ENCODE measurements at regions of chr2 and their contacts with region 1.

Region 1: DNA sequence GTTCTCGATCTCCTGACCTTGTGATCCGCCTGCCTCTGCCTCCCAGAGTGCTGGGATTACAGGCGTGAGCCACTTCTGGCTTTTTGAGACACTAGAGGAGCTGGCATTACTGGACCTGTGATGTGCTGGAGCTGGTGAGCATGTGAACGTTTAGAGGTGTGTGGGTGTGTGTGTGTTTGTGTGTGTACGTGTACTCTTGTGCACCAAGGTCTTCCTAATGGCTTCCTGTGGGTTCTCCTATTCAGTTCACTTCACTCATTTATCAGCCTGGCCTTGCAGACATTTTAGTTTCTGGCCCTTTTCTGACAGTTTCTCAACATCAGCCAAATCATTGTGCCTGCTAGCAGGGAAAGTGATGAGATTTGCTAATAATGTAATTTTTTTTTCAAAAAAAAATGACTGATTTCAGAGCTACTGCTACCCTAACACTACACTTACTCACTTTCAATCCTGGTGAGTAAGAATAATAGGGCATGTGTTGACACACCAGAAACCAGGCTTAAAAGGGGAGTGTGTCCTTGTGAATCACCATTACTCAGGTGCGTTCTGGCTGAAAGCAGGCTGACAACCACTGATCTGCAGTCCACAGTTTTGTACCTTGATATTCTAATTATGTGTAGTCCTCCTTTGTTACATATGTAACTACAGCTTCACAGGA is 41.0 kb upstream of the ACTR3 start:
- DNase-seq: peak; percentile 73
- H3K4me3 Mint-ChIP-seq: no peak overlapping the region
- H3K27ac Mint-ChIP-seq: peak overlapping the region; percentile 88
- H3K4me1 Mint-ChIP-seq: peaks cover 22% of the 10 kb centered on the region
- H3K27me3 Mint-ChIP-seq: no peaks in the 10 kb centered on the region

Region 2: DNA sequence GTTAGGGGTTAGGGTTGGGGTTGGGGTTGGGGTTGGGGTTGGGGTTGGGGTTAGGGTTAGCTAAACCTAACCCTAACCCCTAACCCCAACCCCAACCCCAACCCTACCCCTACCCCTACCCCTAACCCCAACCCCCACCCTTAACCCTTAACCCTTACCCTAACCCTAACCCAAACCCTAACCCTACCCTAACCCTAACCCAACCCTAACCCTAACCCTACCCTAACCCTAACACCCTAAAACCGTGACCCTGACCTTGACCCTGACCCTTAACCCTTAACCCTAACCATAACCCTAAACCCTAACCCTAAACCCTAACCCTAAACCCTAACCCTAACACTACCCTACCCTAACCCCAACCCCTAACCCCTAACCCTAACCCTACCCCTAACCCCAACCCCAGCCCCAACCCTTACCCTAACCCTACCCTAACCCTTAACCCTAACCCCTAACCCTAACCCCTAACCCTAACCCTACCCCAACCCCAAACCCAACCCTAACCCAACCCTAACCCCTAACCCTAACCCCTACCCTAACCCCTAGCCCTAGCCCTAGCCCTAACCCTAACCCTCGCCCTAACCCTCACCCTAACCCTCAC is 245.9 kb before region 1 on chr2:
- CTCF ChIA-PET with region 1: no interaction called
- intact Hi-C with region 1: loop called (anchors 5 kb)
- DNase-seq: no peak
- H3K4me3 Mint-ChIP-seq: peak overlapping the region; percentile 93
- H3K27ac Mint-ChIP-seq: peak overlapping the region; percentile 84
- H3K4me1 Mint-ChIP-seq: peaks cover 9% of the 10 kb centered on the region
- H3K27me3 Mint-ChIP-seq: no peaks in the 10 kb centered on the region

Region 3: DNA sequence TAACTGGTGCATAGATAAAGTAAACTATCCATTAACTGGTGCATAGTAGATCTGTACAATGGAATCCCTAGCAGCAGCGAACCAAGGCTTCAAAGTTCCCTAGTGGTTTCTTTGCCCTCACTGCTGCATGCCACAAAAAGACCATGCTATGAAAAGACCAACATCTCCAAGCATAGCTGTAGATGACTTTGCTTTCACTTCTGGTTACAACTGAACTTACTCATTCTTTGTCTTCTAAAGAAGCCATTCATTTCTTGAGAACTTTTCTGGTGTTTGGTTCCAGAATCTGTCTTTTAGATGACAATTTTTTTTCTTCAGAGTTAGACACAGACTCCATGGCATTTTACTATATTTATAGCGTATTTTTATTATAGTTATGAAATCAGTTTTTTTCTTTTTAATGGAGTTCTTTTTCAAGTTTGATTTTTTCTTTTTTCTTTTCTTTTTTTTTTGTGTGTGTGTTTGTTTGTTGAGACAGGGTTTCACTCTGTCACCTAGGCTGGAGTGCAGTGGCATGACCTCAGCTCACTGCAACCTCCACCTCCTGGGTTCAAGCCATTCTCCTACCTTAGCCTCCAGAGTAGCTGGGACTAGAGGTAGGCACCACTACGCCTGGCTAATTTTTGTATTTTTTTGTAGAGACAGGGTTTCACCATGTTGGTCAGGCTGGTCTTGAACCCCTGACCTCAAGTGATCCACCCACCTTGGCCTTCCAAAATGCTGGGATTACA is 156.0 kb before region 1 on chr2:
- CTCF ChIA-PET with region 1: no interaction called
- intact Hi-C with region 1: loop called (anchors 1 kb)
- DNase-seq: peak; percentile 57
- H3K4me3 Mint-ChIP-seq: peak overlapping the region; percentile 6
- H3K27ac Mint-ChIP-seq: peak overlapping the region; percentile 77
- H3K4me1 Mint-ChIP-seq: peaks cover 34% of the 10 kb centered on the region
- H3K27me3 Mint-ChIP-seq: no peaks in the 10 kb centered on the region

Region 4: DNA sequence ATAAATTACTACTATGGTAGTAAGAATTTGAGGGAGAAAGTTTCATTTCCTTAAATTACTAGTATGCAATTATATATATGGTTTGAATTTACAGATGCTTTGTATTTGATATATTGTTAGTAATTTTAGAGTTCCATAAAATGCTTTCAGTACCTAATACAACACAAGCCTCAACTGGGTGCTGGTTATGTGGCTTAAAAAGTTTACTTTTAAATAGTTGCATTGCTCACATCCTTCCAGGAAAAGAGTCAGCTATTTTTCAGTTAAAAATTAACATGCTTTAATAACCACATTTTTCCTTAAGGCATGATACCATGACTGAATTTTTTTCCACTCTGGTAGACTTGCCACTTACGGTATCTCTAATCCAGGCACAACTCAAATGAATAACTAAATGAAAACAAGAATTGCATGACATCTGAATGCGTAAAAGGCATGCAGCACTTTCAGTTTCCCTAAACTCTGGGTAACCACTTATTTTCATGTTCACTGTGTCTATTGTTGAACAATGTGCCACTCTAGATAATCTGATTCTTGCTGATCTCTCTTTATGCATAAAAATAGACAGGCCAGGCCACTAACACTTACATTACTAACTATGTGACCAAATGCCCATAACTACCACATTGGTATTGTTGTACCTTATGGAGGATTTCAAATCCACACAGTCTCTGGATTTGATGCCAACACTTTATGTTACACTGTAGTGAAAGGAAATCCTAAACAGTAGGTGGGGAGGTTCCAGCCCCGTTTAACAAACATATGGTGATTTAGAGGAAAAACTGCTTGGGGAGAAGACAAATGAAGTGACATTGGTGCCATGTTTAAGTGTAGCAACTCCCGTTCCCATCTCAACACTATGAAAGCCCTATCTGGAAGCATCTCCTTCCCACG is 56.9 kb before region 1 on chr2:
- CTCF ChIA-PET with region 1: interaction called, 3 read pairs
- intact Hi-C with region 1: loop called (anchors 1 kb)
- DNase-seq: peak; percentile 59
- H3K4me3 Mint-ChIP-seq: peak overlapping the region; percentile 26
- H3K27ac Mint-ChIP-seq: peak overlapping the region; percentile 94
- H3K4me1 Mint-ChIP-seq: peaks cover 36% of the 10 kb centered on the region
- H3K27me3 Mint-ChIP-seq: no peaks in the 10 kb centered on the region

Region 5: DNA sequence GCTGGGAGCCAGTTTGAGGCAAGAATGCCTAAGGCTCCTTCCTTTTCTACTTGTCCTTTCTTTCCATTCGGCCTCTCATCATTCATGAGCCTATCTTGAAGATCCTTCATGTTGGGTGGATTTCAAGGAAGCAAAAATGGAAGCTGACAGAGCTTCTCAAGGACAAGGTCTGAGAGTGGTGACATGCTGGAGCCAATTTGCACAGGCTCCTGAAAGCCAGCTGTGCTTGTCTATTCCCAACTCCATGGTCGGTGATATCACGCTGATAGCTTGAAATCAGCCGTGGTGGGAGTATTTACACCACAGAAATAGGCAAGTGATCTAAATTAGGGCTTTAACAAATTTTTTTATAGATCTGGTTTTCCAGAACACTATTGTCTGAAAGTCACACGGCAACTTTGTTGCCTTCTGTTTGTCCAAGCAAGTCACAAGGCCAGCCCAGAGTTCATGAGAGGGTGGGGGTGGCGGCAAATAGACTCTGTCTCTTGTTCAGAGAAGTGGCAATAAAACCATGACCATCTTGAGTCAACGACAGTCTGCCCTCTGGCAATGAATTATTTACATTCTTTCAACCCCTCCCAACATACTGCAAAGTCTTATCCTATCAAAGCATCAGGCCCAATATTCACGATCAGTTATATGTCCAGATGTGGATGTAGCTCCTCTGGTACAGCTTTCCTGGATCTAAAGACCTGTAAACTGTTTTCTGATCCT is 42.5 kb before region 1 on chr2:
- CTCF ChIA-PET with region 1: no interaction called
- intact Hi-C with region 1: no loop called
- DNase-seq: no peak
- H3K4me3 Mint-ChIP-seq: no peak overlapping the region
- H3K27ac Mint-ChIP-seq: no peak overlapping the region
- H3K4me1 Mint-ChIP-seq: no peaks in the 10 kb centered on the region
- H3K27me3 Mint-ChIP-seq: no peaks in the 10 kb centered on the region

Region 6: DNA sequence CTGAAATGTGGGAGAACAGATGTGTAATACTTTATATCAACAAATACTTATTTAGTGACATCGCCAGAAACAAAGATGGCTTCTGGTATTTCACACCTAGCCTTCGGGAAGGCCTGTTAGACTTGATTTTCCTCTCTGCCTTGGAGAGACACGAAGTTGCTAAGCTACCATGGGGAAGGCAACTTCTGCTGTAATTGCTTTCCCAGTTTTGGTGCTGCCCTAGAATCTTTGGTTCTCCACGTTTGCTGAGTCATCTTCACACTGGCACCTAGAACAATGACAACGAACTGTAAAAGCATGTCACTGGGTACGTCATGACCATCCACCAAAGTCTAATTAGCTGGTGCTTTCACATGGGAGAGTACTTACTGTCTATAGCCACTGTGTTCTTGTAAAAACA is 17.7 kb before region 1 on chr2:
- CTCF ChIA-PET with region 1: no interaction called
- intact Hi-C with region 1: no loop called
- DNase-seq: no peak
- H3K4me3 Mint-ChIP-seq: no peak overlapping the region
- H3K27ac Mint-ChIP-seq: no peak overlapping the region
- H3K4me1 Mint-ChIP-seq: no peaks in the 10 kb centered on the region
- H3K27me3 Mint-ChIP-seq: no peaks in the 10 kb centered on the region

Region 7: DNA sequence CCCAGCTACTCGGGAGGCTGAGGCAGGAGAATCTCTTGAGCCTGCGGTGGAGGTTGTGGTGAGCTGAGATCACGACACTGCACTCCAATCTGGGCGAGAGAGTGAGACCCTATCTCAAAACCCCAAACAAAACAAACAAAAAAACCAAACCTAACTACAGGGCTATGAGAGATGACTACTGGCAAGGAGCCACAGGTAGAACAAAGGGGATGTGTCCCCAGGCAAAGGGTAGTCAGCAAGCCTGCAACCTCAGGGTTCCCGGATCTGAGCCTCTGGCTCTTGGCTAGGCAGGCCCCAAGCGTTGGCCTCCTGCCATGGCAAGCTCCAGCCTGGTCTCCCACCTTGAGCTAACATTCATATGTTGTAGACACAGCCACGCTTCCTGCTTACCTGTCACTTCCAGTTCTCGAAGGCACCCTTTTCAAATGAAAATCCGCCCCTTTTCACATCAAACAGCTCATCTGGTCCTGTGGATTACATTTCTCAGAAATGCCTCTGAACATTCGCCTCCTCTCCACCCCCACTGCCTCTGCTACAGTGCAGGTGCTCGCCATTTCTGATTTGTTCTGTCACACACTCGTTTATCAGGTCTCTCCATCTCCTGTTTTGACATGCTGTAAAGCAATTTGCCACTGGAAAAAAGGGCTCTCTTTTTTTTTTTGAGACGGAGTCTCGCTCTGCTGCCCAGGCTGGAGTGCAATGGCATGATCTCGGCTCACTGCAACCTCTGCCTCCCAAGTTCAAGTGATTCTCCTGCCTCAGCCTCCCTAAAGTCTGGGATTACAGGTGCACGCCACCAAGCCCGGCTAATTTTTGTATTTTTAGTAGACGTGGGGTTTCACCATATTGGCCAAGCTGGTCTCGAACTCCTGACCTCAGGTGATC is 27.9 kb after region 1 on chr2:
- CTCF ChIA-PET with region 1: interaction called, 5 read pairs
- intact Hi-C with region 1: loop called (anchors 1 kb)
- DNase-seq: peak; percentile 95
- H3K4me3 Mint-ChIP-seq: peak overlapping the region; percentile 50
- H3K27ac Mint-ChIP-seq: peak overlapping the region; percentile 85
- H3K4me1 Mint-ChIP-seq: peaks cover 52% of the 10 kb centered on the region
- H3K27me3 Mint-ChIP-seq: no peaks in the 10 kb centered on the region

Measured in activated naive CD4-positive, alpha-beta T cell treated with anti-CD3 and anti-CD28 coated beads for 36 hours (primary cell).